AG04450 (cell line): ENCODE measurements at regions of chr3 and their contacts with region 1.

Region 1: DNA sequence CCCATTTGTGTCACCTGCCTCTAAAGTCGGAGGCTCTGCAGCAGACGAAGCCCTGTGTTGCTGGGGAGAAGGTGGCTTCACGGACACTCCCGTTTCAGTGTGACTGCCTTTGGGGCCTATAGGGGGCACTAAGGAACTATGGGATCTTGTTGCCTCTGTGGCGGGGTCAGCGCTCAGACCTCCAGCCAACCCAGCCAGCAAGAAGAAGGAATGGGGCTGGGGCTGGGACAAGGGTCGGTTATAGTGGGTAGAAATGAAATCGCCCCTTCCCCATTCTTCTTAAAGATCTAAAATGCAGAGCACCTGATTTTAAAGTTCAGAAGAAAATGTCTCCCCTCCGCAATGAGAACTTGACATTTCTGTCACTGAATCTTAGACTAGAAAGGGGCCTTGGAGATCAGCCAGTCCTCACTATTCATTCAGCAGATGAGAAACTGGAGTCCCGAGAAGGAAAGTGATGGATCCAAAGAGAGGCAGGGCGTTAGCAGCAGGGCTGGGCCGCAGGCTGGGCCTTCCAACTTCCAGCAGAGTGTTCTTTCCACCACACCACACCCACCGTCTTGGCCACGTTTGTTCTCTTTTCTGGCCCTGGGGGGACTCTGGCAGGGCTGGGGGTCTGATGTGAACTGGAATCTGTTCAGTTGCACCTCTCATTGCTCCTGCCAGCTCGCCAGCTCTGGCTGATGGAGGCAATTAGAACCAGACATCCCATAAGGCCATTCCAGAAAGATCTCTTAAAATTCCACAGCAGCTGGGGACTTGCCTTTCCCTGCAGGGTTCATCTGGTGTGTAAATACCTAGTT is 195.4 kb downstream of the OPA1 start:
- DNase-seq: no peak
- H3K4me3 ChIP-seq: no peak overlapping the region
- H3K27ac ChIP-seq: no peak overlapping the region
- H3K27me3 ChIP-seq: peaks cover 56% of the 10 kb centered on the region
- CTCF ChIP-seq: peak; percentile 85

Region 2: DNA sequence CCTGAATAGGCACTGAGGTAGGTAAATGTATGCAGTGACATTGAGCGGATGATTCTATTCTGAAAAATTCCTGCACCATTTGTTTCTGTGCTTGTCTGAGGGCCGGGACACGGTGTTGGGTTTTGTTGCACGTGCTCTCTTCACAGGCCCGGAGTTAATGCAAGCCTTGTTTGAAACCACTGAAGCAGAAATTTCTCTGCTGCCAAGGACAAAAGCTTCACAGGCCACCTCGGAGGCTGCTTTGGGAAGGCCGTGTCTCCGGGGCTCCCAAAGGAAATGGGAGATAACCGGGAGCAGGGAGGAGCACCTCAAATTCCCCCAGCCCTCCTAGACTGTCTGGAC is 16.0 kb before region 1 on chr3:
- CTCF ChIA-PET with region 1: no interaction called
- POLR2A ChIA-PET with region 1: no interaction called
- DNase-seq: no peak
- H3K4me3 ChIP-seq: no peak overlapping the region
- H3K27ac ChIP-seq: no peak overlapping the region
- H3K27me3 ChIP-seq: peaks cover 52% of the 10 kb centered on the region
- CTCF ChIP-seq: no peak

Region 3: DNA sequence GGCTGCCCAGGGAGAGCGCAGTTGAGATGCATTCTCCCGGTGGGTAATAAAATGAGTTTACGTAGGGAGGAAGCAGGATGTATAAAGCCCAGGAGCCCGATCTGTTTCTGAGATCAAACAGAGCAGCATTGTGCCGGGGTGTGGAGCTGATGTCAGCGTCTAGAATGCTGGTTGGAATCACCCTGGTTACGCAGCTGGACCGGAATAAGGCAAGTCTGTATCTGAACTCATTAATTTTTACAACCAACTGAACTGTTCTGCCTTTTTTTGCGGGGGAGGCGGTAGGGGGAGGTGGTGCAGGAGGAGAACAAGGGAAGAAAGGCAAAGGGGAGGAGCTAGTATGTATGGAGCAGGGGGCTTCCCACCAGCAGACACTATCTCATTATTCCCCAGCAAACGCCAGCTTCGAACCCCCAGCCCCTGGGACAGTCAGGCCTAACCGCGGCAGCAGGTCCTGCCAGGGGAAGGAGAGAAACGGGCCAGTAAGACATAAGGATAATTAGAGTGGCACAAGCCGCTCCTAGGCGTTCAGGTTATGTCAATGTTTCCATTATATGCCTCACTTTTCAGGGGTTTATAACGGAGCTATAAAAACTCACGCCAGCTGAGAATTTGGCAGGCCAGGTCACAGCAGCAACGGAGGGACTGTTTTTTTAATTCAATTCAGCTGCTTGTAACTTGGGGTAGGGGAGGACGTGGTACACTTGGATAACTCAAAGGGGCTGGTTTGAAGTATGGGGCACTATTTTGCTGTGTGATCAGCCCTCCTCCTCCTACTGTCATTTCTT is 172.3 kb after region 1 on chr3:
- CTCF ChIA-PET with region 1: no interaction called
- POLR2A ChIA-PET with region 1: no interaction called
- DNase-seq: no peak
- H3K4me3 ChIP-seq: no peak overlapping the region
- H3K27ac ChIP-seq: no peak overlapping the region
- H3K27me3 ChIP-seq: peaks cover 27% of the 10 kb centered on the region
- CTCF ChIP-seq: no peak

Region 4: DNA sequence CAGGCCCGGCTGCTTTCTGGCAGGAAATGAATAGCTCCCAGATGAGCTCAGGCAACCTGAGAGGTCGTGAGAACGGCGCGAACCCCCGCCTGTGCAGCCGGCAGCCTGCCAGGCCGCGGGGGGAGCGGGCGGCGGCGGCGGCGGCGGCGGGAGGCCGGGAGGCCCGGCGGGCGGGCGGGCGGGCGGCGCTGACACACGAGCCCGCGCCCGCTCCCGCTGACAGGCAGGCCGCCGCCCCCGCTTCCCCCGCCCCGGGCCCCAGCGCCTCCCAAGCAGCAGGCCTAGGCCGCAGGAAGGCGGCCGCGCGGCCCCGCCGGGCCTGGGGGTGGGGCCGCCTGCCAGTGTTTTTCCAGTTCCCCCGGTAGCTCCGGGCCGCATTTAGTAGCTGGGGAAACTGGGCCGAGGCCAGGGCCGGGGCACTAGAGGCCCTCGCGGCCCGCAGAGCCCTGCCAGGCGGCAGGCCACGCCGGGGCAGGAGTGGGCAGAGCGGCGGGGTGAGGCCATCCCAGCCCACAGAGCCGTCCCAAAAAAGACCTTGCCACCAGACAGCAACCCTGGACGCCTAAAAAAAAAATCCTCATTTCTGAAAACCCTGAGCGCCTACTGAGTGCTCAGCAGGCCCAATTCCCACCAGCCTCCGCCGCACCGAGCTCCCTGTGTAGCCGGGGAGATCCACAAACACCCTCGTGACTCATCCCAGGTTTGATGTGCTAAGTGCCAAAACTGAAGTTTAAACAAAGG is 353.2 kb after region 1 on chr3:
- CTCF ChIA-PET with region 1: interaction called, 10 read pairs
- POLR2A ChIA-PET with region 1: no interaction called
- DNase-seq: peak; percentile 69
- H3K4me3 ChIP-seq: peak overlapping the region; percentile 47
- H3K27ac ChIP-seq: peak overlapping the region; percentile 71
- H3K27me3 ChIP-seq: peaks cover 6% of the 10 kb centered on the region
- CTCF ChIP-seq: no peak